SK-N-SH (cell line): ENCODE measurements at regions of chr18 and their contacts with region 1.

Region 1: GRCh38 chr18:45212181-45213039 is 402.9 kb upstream of the SLC14A2 start:
- DNase-seq: peak; percentile 51
- H3K4me3 ChIP-seq: peak overlapping the region in 1 of 2 experiments; percentile 43; a peak in 1 of 4 replicates
- H3K27ac ChIP-seq: no peak overlapping the region
- H3K4me1 ChIP-seq: no peaks in the 10 kb centered on the region
- H3K27me3 ChIP-seq: no peaks in the 10 kb centered on the region
- CTCF ChIP-seq: peak; percentile 96
- EP300 ChIP-seq: no peak
- RAD21 ChIP-seq: peak; percentile 94

Region 2: DNA sequence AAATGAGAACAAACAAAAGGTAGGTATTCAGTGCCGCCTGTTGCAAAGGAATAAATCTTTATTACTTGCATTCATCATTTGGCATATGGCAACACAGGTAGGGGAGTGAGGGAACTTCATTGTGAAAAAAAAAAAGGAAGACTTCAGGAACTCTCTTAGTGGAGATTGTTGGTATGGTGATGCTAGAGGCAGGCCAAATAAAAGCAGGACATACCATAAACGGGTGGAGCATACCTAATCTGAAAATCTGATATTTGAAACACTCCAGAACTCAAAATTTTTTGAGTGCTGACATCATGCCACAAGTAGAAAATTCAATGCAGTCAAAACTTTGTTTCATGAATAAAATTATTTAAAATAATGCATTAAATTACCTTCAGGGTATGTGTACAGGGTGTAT is 1509.4 kb before region 1 on chr18:
- CTCF ChIA-PET with region 1: no interaction called
- POLR2A ChIA-PET with region 1: no interaction called
- DNase-seq: no peak
- H3K4me3 ChIP-seq: no peak overlapping the region
- H3K27ac ChIP-seq: no peak overlapping the region
- H3K4me1 ChIP-seq: no peaks in the 10 kb centered on the region
- H3K27me3 ChIP-seq: no peaks in the 10 kb centered on the region
- CTCF ChIP-seq: no peak
- EP300 ChIP-seq: no peak
- RAD21 ChIP-seq: no peak

Region 3: GRCh38 chr18:44130376-44130942 is 1082.0 kb before region 1 on chr18:
- CTCF ChIA-PET with region 1: interaction called, 15 read pairs
- POLR2A ChIA-PET with region 1: no interaction called
- DNase-seq: peak; percentile 59
- H3K4me3 ChIP-seq: no peak overlapping the region
- H3K27ac ChIP-seq: no peak overlapping the region
- H3K4me1 ChIP-seq: no peaks in the 10 kb centered on the region; a peak in 1 of 4 replicates
- H3K27me3 ChIP-seq: no peaks in the 10 kb centered on the region
- CTCF ChIP-seq: peak; percentile 79
- EP300 ChIP-seq: no peak
- RAD21 ChIP-seq: peak; percentile 87

Region 4: DNA sequence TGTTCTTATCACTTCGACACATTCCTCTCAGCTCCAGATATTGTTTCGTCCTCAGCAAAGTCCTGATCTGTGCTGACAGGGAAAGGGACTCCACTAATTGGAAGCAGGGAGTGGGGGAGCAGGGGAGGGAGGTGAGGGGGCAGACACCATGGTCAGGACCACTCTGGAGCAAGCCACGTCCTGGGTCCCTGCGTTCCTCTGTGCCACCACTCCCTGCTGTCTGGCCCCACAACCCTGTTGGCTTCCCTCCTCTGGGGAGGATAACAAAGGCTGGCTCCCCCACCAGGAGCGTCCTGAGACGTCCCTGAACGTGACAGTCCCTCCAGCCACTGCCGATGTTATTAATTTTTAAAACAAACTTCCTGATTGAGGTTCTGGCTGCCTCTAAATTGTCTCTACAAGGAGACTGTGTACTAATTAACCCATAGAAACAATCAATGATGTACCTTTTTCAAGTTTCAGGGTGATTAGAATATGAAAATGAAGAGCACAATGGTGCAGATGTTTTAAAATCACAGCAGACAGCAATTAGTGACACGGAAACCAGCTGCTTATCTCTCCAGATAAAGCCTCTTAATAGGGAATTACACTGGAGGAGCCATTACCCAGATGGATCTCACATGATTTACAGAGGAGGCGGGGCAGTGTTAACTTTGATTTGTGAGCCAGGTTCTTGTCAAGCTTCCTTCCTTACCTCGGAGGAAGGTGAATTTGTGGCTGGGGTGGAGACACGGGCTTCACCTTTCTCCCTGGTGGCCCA is 274.3 kb before region 1 on chr18:
- CTCF ChIA-PET with region 1: interaction called, 17 read pairs
- POLR2A ChIA-PET with region 1: no interaction called
- DNase-seq: peak; percentile 68
- H3K4me3 ChIP-seq: peak overlapping the region in 1 of 2 experiments; percentile 29; a peak in 1 of 4 replicates
- H3K27ac ChIP-seq: peak overlapping the region in 1 of 2 experiments; percentile 28; a peak in 2 of 4 replicates
- H3K4me1 ChIP-seq: peaks cover 5 to 17% of the 10 kb centered on the region in 2 experiments; a peak in 2 of 4 replicates
- H3K27me3 ChIP-seq: no peaks in the 10 kb centered on the region
- CTCF ChIP-seq: no peak
- EP300 ChIP-seq: peak in 1 of 2 experiments; percentile 78; a peak in 2 of 4 replicates
- RAD21 ChIP-seq: no peak

Region 5: GRCh38 chr18:45526114-45526841 is 313.9 kb after region 1 on chr18:
- CTCF ChIA-PET with region 1: interaction called, 11 read pairs
- POLR2A ChIA-PET with region 1: no interaction called
- DNase-seq: peak; percentile 19
- H3K4me3 ChIP-seq: no peak overlapping the region
- H3K27ac ChIP-seq: peak overlapping the region in 1 of 2 experiments; percentile 53; a peak in 1 of 4 replicates
- H3K4me1 ChIP-seq: peaks cover 3 to 9% of the 10 kb centered on the region in 2 experiments; a peak in 3 of 4 replicates
- H3K27me3 ChIP-seq: no peaks in the 10 kb centered on the region
- CTCF ChIP-seq: peak; percentile 37
- EP300 ChIP-seq: no peak
- RAD21 ChIP-seq: peak; percentile 77